ENCODE measurements at regions of chr1 and their contacts with region 1.

Region 1: DNA sequence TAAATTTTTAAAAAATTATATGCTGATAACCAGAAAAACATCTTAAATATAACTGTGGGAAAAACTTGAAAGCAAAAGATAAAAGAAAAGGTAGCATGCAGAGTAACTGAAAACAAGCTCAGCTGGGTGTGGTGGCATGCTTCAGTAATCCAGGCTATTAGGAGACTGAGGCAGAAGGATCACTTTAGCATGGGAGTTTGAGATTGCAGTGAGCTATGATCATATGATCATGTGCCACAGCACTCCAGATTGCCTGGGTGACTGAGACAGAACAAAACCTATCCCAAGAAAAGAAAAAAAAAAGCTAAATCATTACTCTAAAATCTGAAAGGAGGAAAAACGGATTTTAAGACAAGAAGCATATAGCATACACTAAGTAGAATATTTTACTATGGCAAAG is 1624.0 kb downstream of the AMY1C start:
- DNase-seq: no peak
- H3K4me3 ChIP-seq: no peak overlapping the region
- H3K27ac ChIP-seq: no peak overlapping the region
- H3K4me1 ChIP-seq: no peaks in the 10 kb centered on the region
- H3K27me3 ChIP-seq: no peaks in the 10 kb centered on the region
- CTCF ChIP-seq: no peak
- EP300 ChIP-seq: no peak
- POLR2A ChIP-seq: no peak

Region 2: DNA sequence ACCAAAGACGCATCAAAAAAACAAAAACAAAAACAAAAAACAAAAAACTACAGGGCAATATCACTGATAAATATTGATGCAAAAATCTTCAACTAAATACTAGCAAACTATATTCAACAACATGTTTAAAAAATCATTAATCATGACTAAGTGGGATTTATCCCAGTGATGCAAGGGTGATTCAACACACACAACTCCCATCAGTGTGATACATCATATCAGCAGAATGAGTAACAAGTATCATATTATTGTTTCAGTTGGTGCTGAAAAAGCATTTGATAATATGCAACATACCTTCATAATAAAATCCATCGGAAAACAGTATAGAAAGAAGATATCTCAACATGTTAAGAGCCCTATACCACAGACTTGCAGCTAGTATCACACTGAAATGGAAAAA is 671.0 kb before region 1 on chr1:
- intact Hi-C with region 1: loop called in 1 of 4 experiments (anchors 10 kb)
- DNase-seq: no peak
- H3K4me3 ChIP-seq: no peak overlapping the region
- H3K27ac ChIP-seq: no peak overlapping the region
- H3K4me1 ChIP-seq: no peaks in the 10 kb centered on the region
- H3K27me3 ChIP-seq: no peaks in the 10 kb centered on the region
- CTCF ChIP-seq: no peak
- EP300 ChIP-seq: no peak
- POLR2A ChIP-seq: no peak